Activated T-helper 2 cell treated with anti-CD3 and anti-CD28 coated beads, Interferon-gamma antibody, Interleukin-2, Interleukin-4, amounts not matched to agents 10 μg/mL and 5 μg/mL and 100 μg/mL, durations not matched to agents 14 hours and 24 hours and 36 hours (primary cell): ENCODE measurements at regions of chr1 and their contacts with region 1.

Region 1: GRCh38 chr1:44807262-44808062 is at the start of gene DYNLT4:
- DNase-seq: peak; percentile 87
- H3K4me3 Mint-ChIP-seq: peak within 1 kb of the TSS; percentile 75
- H3K27ac Mint-ChIP-seq: peak within 1 kb of the TSS; percentile 99
- H3K4me1 Mint-ChIP-seq: peaks cover 68% of the 10 kb centered on the region
- H3K27me3 Mint-ChIP-seq: no peaks in the 10 kb centered on the region
- total RNA-seq, gene DYNLT4: 0.32 TPM in 1 of 2 replicates, not detected in the other

Region 2: DNA sequence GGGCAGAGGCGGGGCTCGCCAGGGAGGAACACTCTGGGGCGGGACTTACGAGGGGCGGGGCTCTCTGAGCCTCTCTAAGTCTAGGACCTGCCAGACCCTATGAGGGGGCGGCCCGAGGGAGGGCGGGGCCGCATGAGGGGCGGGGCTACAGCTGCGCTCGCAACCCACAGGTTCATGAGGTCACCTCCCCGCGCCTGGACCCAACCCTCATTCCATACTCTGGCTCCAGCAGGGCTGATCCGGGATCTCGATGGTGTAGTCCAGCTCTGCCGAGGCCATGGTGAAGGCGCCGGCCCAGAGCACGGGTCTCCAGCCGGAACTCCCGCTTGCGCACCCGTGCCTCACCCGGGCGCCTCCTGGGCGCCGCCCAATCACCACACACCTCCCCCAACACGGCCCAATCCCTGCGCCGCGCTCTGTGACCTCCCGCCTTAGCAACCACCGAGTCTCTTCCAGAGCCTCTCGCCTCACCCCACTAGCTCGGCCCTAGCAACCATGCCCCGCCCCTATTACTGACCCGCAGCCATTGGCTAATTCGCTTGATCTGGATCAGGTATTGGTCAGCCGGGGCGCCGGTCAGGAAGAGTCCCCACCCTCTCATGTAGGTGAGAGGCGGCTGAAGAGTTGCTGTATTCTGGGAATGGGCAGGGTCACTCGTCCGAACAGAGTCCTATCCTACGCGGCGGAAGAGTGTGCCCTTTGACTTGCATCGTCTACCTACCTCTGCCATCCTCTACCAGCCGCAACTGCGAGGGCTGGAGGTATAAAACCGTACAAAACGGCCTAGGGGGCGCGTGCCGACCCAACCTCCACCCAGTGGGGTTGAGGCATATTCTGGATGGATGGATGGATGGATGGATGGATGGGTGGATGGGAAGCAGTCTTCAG is 133.1 kb before region 1 on chr1 and contains the starts of genes ARMH1 and TMEM53:
- intact Hi-C with region 1: loop called (anchors 5 kb)
- DNase-seq: peak; percentile 98
- H3K4me3 Mint-ChIP-seq: peak within 1 kb of the TSS; percentile 80
- H3K27ac Mint-ChIP-seq: peak within 1 kb of the TSS; percentile 86
- H3K4me1 Mint-ChIP-seq: peaks cover 26% of the 10 kb centered on the region
- H3K27me3 Mint-ChIP-seq: no peaks in the 10 kb centered on the region
- total RNA-seq, gene ARMH1: 139 and 157 TPM in 2 replicates
- total RNA-seq, gene TMEM53: 6.3 and 6.7 TPM in 2 replicates

Region 3: DNA sequence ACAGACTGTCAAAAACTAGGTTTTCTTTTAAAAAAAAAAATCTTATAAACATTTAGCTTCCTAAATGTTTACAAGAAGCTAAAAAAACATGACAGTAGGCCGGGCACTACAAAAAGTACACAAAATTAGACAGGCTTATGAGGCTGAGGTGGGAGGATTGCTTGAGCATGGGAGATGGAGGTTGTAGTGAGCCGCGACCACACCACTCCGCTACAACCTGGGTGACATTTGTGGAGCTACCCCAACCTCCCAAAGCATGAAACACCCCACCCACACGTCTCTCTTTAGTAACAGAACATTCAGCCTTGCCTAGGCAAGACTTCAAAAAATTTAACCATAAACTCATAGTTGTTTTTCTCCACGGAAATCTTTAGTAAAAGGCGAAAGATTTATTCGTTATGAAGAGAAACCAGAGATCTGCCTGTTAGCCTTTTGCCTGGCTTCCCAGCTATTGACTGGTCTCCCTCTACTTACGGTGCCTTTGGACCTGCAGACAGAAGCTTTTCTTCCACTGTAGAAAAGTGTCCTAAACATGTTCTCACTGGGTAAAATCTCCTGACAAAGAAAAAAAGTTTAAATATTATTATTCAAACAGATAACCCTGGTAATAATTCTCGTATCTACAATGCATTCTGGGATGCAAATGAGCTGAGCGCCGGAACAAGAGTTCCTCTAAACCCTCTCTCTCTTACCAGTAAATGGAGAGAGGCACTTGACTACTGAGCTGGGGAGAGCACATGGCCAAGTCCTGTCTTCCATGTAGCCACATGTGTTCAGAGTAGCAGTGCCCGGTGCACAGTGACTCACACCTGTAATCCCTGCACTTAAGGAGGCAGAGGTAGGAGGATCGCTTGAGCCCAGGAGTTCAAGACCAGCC is 85.7 kb before region 1 on chr1:
- intact Hi-C with region 1: loop called (anchors 1 kb)
- DNase-seq: peak; percentile 83
- H3K4me3 Mint-ChIP-seq: peak overlapping the region; percentile 70
- H3K27ac Mint-ChIP-seq: peak overlapping the region; percentile 97
- H3K4me1 Mint-ChIP-seq: peaks cover 69% of the 10 kb centered on the region
- H3K27me3 Mint-ChIP-seq: no peaks in the 10 kb centered on the region

Region 4: GRCh38 chr1:44730741-44731512 is 76.5 kb before region 1 on chr1 and contains the start of gene RNU5D-1:
- intact Hi-C with region 1: loop called (anchors 2 kb)
- DNase-seq: peak; percentile 88
- H3K4me3 Mint-ChIP-seq: peak within 1 kb of the TSS; percentile 70
- H3K27ac Mint-ChIP-seq: peak within 1 kb of the TSS; percentile 100
- H3K4me1 Mint-ChIP-seq: peaks cover 33% of the 10 kb centered on the region
- H3K27me3 Mint-ChIP-seq: no peaks in the 10 kb centered on the region
- total RNA-seq, gene RNU5D-1: not detected in 2 replicates

Region 5: DNA sequence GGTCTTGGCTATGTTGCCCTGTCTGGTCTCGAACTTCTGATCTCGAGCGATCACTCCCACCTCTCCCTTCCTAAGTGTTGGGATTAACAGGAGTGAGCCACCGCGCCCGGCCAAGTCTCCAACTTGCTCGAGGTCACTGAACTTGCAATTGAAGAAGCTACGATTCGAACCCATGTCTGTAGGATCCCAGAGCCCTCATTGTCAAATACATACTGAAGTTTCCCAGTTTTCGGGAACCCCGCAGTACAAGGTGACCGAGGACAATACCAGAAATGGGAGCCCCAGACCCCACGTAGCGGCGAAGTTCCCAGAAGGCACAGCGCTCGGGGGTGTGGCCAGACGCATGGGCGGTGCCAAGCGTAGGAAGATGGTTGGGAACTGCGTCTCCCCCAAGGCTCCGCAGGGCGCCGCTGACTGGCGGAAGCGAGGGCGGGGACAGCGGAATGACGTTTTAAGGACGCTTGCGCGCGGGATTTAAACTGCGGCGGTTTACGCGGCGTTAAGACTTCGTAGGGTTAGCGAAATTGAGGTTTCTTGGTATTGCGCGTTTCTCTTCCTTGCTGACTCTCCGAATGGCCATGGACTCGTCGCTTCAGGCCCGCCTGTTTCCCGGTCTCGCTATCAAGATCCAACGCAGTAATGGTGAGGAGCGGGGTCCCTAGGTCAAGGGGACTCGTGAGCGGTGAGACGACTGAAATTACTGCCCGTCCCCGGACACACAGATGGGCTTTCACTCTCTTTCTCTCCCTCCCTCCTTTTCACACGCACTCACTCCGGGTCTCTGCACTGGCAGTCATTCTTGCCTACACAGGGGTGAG is 67.9 kb before region 1 on chr1 and contains the start of gene KIF2C:
- intact Hi-C with region 1: loop called (anchors 1 kb)
- DNase-seq: peak; percentile 96
- H3K4me3 Mint-ChIP-seq: peak within 1 kb of the TSS; percentile 90
- H3K27ac Mint-ChIP-seq: peak within 1 kb of the TSS; percentile 86
- H3K4me1 Mint-ChIP-seq: peaks cover 28% of the 10 kb centered on the region
- H3K27me3 Mint-ChIP-seq: no peaks in the 10 kb centered on the region
- total RNA-seq, gene KIF2C: 82.7 and 83.5 TPM in 2 replicates

Region 6: DNA sequence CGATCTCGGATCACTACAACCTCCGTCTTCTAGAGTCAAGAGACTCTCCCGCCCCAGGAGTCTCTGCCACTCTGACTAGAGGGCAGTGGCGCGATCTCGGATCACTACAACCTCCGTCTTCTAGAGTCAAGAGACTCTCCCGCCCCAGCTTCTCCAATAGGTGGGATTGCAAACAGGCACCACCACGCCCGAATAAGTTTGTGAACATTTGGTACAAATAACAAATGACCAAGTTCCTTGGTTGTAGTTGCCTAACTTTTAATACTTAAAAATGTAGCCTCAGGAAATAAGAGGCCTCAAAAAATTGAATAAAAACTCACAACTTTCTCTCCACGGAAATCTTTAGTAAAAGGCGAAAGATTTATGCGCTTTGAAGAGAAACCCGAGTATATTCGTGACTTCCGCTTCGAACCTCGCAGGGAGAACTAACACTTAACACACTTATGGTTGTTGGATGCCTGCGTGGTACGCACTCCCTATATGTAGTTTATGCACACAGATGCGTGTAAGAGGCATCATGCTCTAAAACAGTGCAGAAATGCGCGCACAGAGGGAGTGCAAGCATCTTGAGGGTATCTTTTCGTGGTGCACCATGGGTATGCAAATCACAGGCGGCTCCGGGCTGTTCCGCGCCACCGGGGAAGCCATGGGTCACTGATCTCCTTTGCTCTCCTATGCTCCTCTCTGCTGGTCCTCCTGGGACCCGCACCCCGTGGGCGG is 12.3 kb after region 1 on chr1:
- intact Hi-C with region 1: loop called (anchors 1 kb)
- DNase-seq: peak; percentile 84
- H3K4me3 Mint-ChIP-seq: peak overlapping the region; percentile 88
- H3K27ac Mint-ChIP-seq: peak overlapping the region; percentile 98
- H3K4me1 Mint-ChIP-seq: peaks cover 35% of the 10 kb centered on the region
- H3K27me3 Mint-ChIP-seq: no peaks in the 10 kb centered on the region

Region 7: GRCh38 chr1:45490626-45491486 is 683.4 kb after region 1 on chr1 and contains the start of gene TESK2:
- intact Hi-C with region 1: loop called (anchors 2 kb)
- DNase-seq: peak; percentile 97
- H3K4me3 Mint-ChIP-seq: no peak within 1 kb of the TSS
- H3K27ac Mint-ChIP-seq: no peak within 1 kb of the TSS
- H3K4me1 Mint-ChIP-seq: peaks cover 9% of the 10 kb centered on the region
- H3K27me3 Mint-ChIP-seq: peaks cover 9% of the 10 kb centered on the region
- total RNA-seq, gene TESK2: 2.3 and 2.9 TPM in 2 replicates